Naive thymus-derived CD4-positive, alpha-beta T cell (primary cell): ENCODE measurements at regions of chr11 and their contacts with region 1.

Region 1: DNA sequence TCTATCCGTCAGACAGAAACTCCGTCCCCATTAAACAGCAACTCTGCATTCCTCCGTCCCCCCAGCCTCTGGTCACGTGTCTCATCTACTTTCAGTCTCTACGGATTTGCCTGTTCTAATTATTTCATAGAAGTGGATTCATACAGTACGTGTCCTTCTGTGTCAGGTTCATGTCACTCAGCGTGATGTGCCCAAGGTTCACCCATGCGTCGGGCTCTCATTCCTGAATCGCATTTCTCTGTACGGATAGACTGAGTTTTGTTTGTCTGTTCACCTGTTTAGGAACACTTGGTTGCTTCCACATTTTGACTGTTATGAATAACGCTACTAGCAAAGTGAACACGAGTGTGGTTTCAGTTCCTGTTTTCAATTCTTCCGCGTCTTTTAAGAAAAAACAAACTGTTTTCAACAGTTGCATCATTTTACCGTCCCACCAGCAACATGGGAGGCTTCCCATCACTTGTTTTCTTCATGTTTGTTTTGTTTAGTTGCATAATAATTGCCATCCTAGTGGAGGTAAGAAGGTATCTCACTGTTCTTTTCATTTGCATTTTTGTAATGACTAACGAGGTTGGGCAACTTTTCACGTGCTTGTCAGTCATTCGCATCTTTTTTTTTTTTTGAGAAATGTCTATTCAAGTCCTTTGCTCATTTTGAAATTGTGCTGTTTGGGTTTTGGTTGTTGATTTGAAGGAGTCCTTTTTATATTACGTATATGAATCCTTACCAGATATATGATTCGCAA is 8.9 kb upstream of the NLRP6 start:
- DNase-seq: peak; percentile 43 to 95 (median 88)
- ATAC-seq: peak; percentile 84
- H3K4me3 ChIP-seq: peak overlapping the region; percentile 59
- H3K4me3 Mint-ChIP-seq: peak overlapping the region; percentile 85 to 96 (median 90)
- H3K27ac ChIP-seq: peak overlapping the region; percentile 80
- H3K27ac Mint-ChIP-seq: peak overlapping the region; percentile 92 to 100 (median 99)
- H3K4me1 ChIP-seq: peaks cover 24 to 26% of the 10 kb centered on the region in 2 donors
- H3K4me1 Mint-ChIP-seq: peaks cover 20 to 47% (median 35%) of the 10 kb centered on the region in 7 donors
- H3K27me3 ChIP-seq: no peaks in the 10 kb centered on the region
- H3K27me3 Mint-ChIP-seq: peaks cover 0 to 8% (median 0%) of the 10 kb centered on the region in 5 donors

Region 2: GRCh38 chr11:257766-258493 is 11.4 kb before region 1 on chr11:
- CTCF ChIA-PET with region 1: interaction called, 31 read pairs
- POLR2A ChIA-PET with region 1: interaction called, 40 read pairs
- intact Hi-C with region 1: no loop called
- DNase-seq: no peak
- ATAC-seq: no peak
- H3K4me3 ChIP-seq: no peak overlapping the region
- H3K4me3 Mint-ChIP-seq: no peak overlapping the region
- H3K27ac ChIP-seq: no peak overlapping the region
- H3K27ac Mint-ChIP-seq: peak overlapping the region in 2 of 9 donors; percentile 48 to 55
- H3K4me1 ChIP-seq: no peaks in the 10 kb centered on the region
- H3K4me1 Mint-ChIP-seq: peaks cover 0 to 12% (median 0%) of the 10 kb centered on the region in 7 donors
- H3K27me3 ChIP-seq: no peaks in the 10 kb centered on the region
- H3K27me3 Mint-ChIP-seq: peaks cover 0 to 8% (median 0%) of the 10 kb centered on the region in 5 donors

Region 3: DNA sequence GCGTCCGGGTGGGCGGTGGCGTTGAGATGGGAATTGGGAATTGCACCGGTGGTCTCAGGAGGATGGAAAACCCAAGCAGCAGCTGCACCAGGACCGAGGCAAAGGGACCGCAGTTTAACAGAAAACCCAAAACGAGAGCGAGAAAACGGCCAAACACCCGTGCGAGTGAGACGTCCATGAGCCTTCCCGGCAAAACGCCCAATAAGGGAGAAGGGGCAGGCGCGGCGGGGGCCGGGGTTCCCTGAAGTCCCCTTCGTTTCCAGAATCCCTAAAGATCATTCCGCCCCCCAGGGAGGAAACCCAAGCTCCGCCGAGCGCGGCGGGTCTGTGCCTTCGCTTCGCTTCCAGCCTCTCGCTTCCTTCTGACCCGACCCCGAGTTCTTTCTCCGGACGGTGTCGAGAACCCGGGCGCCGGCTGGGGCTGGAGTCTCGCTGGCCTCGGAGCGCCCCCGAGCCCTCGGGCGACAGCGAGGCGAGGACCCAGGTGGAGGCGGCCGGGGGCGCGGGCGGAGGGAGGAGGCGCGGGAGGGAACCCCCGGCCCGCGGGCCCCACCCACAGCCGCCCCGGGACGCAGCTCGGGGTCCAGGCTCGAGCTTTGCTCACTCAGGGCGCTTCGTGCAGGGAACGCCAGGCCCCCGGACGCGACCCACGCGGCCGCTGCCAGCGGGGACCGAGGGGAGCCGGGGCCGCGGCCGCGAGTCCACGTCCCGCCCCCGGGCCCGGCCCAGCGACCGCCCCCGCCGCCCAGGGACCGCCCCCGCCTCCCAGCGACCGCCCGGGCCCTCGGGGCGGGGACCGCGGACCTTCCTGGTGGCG is 19.2 kb after region 1 on chr11 and contains the start of gene PGGHG:
- CTCF ChIA-PET with region 1: interaction called, 11 read pairs
- POLR2A ChIA-PET with region 1: interaction called, 330 read pairs
- intact Hi-C with region 1: loop called (anchors 1 kb)
- DNase-seq: peak in 5 of 9 donors; percentile 40 to 72 (median 49)
- ATAC-seq: peak; percentile 65
- H3K4me3 ChIP-seq: peak within 1 kb of the TSS; percentile 64
- H3K4me3 Mint-ChIP-seq: peak within 1 kb of the TSS; percentile 88 to 100 (median 98)
- H3K27ac ChIP-seq: peak within 1 kb of the TSS; percentile 100
- H3K27ac Mint-ChIP-seq: peak within 1 kb of the TSS; percentile 89 to 100 (median 98)
- H3K4me1 ChIP-seq: peaks cover 16% of the 10 kb centered on the region in 2 donors
- H3K4me1 Mint-ChIP-seq: peaks cover 22 to 52% (median 38%) of the 10 kb centered on the region in 7 donors
- H3K27me3 ChIP-seq: no peaks in the 10 kb centered on the region
- H3K27me3 Mint-ChIP-seq: peaks cover 0 to 14% (median 0%) of the 10 kb centered on the region in 5 donors
- total RNA-seq, gene PGGHG: 325 to 656 (median 348) TPM

Region 4: DNA sequence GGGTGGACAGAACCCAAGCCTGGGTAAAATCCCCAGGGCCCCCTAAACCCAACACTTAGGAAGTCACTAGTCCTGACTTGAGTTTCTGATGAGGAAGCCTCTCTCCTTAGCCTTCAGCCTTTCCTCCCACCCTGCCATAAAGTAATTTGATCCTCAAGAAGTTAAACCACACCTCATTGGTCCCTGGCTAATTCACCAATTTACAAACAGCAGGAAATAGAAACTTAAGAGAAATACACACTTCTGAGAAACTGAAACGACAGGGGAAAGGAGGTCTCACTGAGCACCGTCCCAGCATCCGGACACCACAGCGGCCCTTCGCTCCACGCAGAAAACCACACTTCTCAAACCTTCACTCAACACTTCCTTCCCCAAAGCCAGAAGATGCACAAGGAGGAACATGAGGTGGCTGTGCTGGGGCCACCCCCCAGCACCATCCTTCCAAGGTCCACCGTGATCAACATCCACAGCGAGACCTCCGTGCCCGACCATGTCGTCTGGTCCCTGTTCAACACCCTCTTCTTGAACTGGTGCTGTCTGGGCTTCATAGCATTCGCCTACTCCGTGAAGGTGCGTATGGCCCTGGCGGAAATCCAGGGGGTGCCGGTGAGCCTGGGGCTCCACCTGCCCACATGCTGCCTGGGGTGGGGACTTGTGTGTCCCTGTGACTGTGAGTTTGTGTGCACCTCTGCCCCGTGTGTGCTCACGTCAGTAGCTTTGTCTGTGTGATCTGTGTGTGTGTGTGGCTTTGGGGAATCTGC is 44.6 kb after region 1 on chr11 and contains the start of gene IFITM1:
- CTCF ChIA-PET with region 1: interaction called, 7 read pairs
- POLR2A ChIA-PET with region 1: interaction called, 54 read pairs
- intact Hi-C with region 1: loop called (anchors 1 to 2 kb)
- DNase-seq: peak in 8 of 9 donors; percentile 55 to 80 (median 76)
- ATAC-seq: peak; percentile 72
- H3K4me3 ChIP-seq: peak within 1 kb of the TSS; percentile 71
- H3K4me3 Mint-ChIP-seq: peak within 1 kb of the TSS; percentile 88 to 100 (median 96)
- H3K27ac ChIP-seq: peak within 1 kb of the TSS; percentile 95
- H3K27ac Mint-ChIP-seq: peak within 1 kb of the TSS; percentile 94 to 99 (median 99)
- H3K4me1 ChIP-seq: peaks cover 13 to 37% of the 10 kb centered on the region in 2 donors
- H3K4me1 Mint-ChIP-seq: peaks cover 26 to 43% (median 34%) of the 10 kb centered on the region in 7 donors
- H3K27me3 ChIP-seq: no peaks in the 10 kb centered on the region
- H3K27me3 Mint-ChIP-seq: peaks cover 0 to 3% (median 0%) of the 10 kb centered on the region in 5 donors
- total RNA-seq, gene IFITM1: 97.4 to 985 (median 241) TPM

Region 5: DNA sequence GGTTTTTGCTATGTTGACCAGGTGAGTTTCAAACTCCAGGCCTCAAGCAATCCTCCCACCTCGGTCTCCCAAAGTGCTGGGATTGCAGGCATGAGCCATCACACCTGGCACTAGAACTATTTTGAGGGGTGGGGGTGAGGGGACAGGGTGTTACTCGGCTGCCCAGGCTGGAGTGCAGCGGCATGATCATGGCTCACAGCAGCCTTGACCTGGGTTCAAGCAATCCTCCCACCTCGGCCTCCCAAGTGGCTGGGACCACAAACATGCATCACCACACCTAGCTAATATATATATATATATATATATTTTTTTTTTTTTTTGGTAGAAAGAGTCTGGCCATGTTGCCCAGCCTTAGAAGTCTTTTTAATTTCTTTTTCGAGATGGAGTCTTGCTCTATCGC is 68.4 kb after region 1 on chr11:
- CTCF ChIA-PET with region 1: no interaction called
- POLR2A ChIA-PET with region 1: no interaction called
- intact Hi-C with region 1: no loop called
- DNase-seq: no peak
- ATAC-seq: no peak
- H3K4me3 ChIP-seq: no peak overlapping the region
- H3K4me3 Mint-ChIP-seq: peak overlapping the region in 2 of 10 donors; percentile 52 to 57
- H3K27ac ChIP-seq: no peak overlapping the region
- H3K27ac Mint-ChIP-seq: peak overlapping the region in 1 of 9 donors; percentile 84
- H3K4me1 ChIP-seq: peaks cover 0 to 16% of the 10 kb centered on the region in 2 donors
- H3K4me1 Mint-ChIP-seq: peaks cover 23 to 68% (median 48%) of the 10 kb centered on the region in 7 donors
- H3K27me3 ChIP-seq: no peaks in the 10 kb centered on the region
- H3K27me3 Mint-ChIP-seq: peaks cover 0 to 10% (median 0%) of the 10 kb centered on the region in 5 donors

Region 6: DNA sequence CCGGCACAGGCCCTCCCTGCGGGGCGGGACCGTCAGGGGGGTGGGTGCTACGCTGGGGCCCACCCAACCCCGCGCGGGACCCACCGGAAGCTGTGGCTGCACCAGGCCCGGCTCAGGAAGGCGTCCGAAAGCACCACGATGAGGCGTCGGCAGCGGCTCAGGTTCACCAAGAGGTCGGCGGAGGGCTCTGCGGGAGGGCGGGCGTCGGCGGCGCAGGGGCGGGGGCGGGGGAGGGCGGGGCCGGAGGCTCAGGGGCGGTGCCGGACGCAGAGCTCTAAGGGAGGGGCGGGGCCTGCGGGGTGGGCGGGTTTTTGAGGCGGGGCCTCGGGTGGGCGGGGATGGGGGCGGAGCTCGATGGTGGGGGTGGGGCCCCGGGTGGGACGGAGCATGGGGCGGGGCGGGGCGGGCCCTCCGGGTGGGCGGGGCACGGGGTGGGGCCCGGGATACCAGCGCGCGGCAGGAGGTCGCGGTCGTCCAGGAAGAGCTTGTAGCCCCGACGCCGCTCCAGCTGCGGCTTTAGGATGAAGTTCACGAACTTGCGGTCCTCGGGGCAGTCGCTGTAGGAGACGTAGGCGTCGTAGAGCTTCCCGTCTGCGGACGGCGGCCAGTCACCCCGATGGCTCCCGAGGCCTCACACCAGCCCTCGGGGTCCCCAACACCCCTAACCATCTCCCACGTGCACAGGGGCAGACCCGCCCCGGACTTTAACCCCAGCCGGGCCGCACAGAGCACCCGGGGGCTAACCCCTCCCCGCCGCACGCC is 137.8 kb after region 1 on chr11:
- CTCF ChIA-PET with region 1: no interaction called
- POLR2A ChIA-PET with region 1: interaction called, 14 read pairs
- intact Hi-C with region 1: loop called (anchors 2 to 5 kb)
- DNase-seq: peak; percentile 80 to 93 (median 92)
- ATAC-seq: peak; percentile 90
- H3K4me3 ChIP-seq: no peak overlapping the region
- H3K4me3 Mint-ChIP-seq: peak overlapping the region in 6 of 10 donors; percentile 12 to 60 (median 38)
- H3K27ac ChIP-seq: peak overlapping the region; percentile 75
- H3K27ac Mint-ChIP-seq: peak overlapping the region in 7 of 9 donors; percentile 21 to 85 (median 51)
- H3K4me1 ChIP-seq: peaks cover 9 to 13% of the 10 kb centered on the region in 2 donors
- H3K4me1 Mint-ChIP-seq: peaks cover 4 to 21% (median 6%) of the 10 kb centered on the region in 7 donors
- H3K27me3 ChIP-seq: no peaks in the 10 kb centered on the region
- H3K27me3 Mint-ChIP-seq: no peaks in the 10 kb centered on the region

Region 7: GRCh38 chr11:587978-588380 is 318.7 kb after region 1 on chr11:
- CTCF ChIA-PET with region 1: no interaction called
- POLR2A ChIA-PET with region 1: no interaction called
- intact Hi-C with region 1: no loop called
- DNase-seq: peak; percentile 34 to 91 (median 78)
- ATAC-seq: peak; percentile 93
- H3K4me3 ChIP-seq: peak overlapping the region; percentile 16
- H3K4me3 Mint-ChIP-seq: peak overlapping the region; percentile 63 to 90 (median 76)
- H3K27ac ChIP-seq: peak overlapping the region; percentile 65
- H3K27ac Mint-ChIP-seq: peak overlapping the region; percentile 95 to 100 (median 99)
- H3K4me1 ChIP-seq: peaks cover 10 to 12% of the 10 kb centered on the region in 2 donors
- H3K4me1 Mint-ChIP-seq: peaks cover 9 to 38% (median 29%) of the 10 kb centered on the region in 7 donors
- H3K27me3 ChIP-seq: no peaks in the 10 kb centered on the region
- H3K27me3 Mint-ChIP-seq: no peaks in the 10 kb centered on the region

Region 8: GRCh38 chr11:1382831-1383607 is 1113.7 kb after region 1 on chr11:
- CTCF ChIA-PET with region 1: no interaction called
- POLR2A ChIA-PET with region 1: no interaction called
- intact Hi-C with region 1: no loop called
- DNase-seq: peak; percentile 51 to 81 (median 60)
- ATAC-seq: peak; percentile 87
- H3K4me3 ChIP-seq: peak overlapping the region; percentile 71
- H3K4me3 Mint-ChIP-seq: peak overlapping the region; percentile 61 to 87 (median 77)
- H3K27ac ChIP-seq: peak overlapping the region; percentile 88
- H3K27ac Mint-ChIP-seq: peak overlapping the region; percentile 21 to 90 (median 74)
- H3K4me1 ChIP-seq: no peaks in the 10 kb centered on the region
- H3K4me1 Mint-ChIP-seq: peaks cover 0 to 13% (median 9%) of the 10 kb centered on the region in 7 donors
- H3K27me3 ChIP-seq: no peaks in the 10 kb centered on the region
- H3K27me3 Mint-ChIP-seq: peaks cover 0 to 28% (median 0%) of the 10 kb centered on the region in 5 donors